HepG2 (cell line): ENCODE measurements at regions of chr19 and their contacts with region 1.

Region 1: GRCh38 chr19:8321060-8321985 is at the starts of genes NDUFA7 and RPS28:
- DNase-seq: peak; percentile 85
- ATAC-seq: peak; percentile 81
- H3K4me3 ChIP-seq: peak within 1 kb of the TSS; percentile 69 to 97 (median 82)
- H3K27ac ChIP-seq: peak within 1 kb of the TSS; percentile 88
- H3K4me1 ChIP-seq: peaks cover 36% of the 10 kb centered on the region
- H3K27me3 ChIP-seq: no peaks in the 10 kb centered on the region; a peak in 1 of 5 replicates
- CTCF ChIP-seq: peak; percentile 79
- EP300 ChIP-seq: no peak
- POLR2A ChIP-seq: peak; percentile 90 to 92
- RAD21 ChIP-seq: peak; percentile 58
- total RNA-seq, gene NDUFA7: 57.2 and 64.5 TPM in 2 replicates
- total RNA-seq, gene RPS28: 281 and 319 TPM in 2 replicates

Region 2: GRCh38 chr19:8204961-8205360 is 116.4 kb before region 1 on chr19:
- CTCF ChIA-PET with region 1: no interaction called
- POLR2A ChIA-PET with region 1: no interaction called
- in situ Hi-C with region 1: no loop called
- intact Hi-C with region 1: no loop called
- DNase-seq: no peak
- ATAC-seq: no peak
- H3K4me3 ChIP-seq: no peak overlapping the region
- H3K27ac ChIP-seq: no peak overlapping the region
- H3K4me1 ChIP-seq: peaks cover 50% of the 10 kb centered on the region
- H3K27me3 ChIP-seq: peaks cover 0 to 7% of the 10 kb centered on the region in 2 experiments; a peak in 1 of 5 replicates
- CTCF ChIP-seq: no peak
- EP300 ChIP-seq: no peak
- POLR2A ChIP-seq: no peak
- RAD21 ChIP-seq: no peak

Region 3: DNA sequence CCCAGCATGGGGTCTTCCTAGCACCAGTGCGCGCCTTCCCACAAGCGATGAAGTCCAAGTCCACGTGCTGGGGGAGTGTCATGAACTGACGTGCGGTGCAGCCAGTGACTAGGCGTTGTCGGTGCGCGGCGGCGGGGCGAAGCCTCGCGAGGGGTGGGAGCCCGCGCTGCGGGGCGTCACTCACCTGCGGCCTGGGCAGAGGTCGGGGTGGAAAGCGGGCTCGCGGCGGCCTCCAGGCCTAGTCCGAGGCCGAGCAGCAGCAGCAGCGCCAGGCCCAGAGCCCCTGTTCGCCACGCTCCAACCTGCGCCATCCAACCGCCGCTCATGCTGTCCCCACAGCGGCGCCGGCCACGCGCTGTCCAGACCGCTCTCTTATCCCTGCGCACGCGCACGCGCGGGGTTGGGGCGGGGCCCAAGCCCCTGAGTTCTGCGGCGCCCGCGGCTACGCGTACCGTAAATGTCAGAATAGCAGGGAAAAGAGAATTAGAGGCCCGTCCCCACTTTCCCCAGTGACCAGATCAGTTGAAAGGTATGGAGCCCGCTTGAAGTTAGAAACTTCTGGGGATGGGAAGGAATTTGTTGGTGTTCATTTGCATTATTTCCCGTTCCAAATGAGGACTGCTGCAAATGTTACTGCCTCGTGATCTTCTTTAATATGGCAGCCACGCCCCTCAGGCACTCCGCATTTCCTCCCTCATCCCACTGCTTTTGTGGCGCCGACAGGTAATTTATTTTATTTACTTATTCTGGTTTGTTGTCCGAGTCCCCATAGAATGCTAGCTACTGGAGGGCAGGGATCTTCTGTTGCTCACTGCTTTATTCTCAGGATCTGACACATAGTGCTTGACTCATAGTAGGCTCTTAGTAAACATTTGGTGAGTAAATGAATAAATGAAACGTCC is 13.1 kb before region 1 on chr19 and contains the start of gene CD320:
- CTCF ChIA-PET with region 1: no interaction called
- POLR2A ChIA-PET with region 1: interaction called, 39 read pairs
- in situ Hi-C with region 1: no loop called
- intact Hi-C with region 1: no loop called
- DNase-seq: peak; percentile 86
- ATAC-seq: peak; percentile 89
- H3K4me3 ChIP-seq: peak within 1 kb of the TSS; percentile 50 to 77 (median 66)
- H3K27ac ChIP-seq: peak within 1 kb of the TSS; percentile 85
- H3K4me1 ChIP-seq: peaks cover 39% of the 10 kb centered on the region
- H3K27me3 ChIP-seq: no peaks in the 10 kb centered on the region
- CTCF ChIP-seq: no peak; the same call in none of the 2 replicates
- EP300 ChIP-seq: no peak
- POLR2A ChIP-seq: peak; percentile 86 to 90
- RAD21 ChIP-seq: no peak; the same call in none of the 2 replicates
- total RNA-seq, gene CD320: 44.4 and 99.9 TPM in 2 replicates

Region 4: GRCh38 chr19:8334458-8335342 is 13.4 kb after region 1 on chr19:
- CTCF ChIA-PET with region 1: no interaction called
- POLR2A ChIA-PET with region 1: interaction called, 16 read pairs
- in situ Hi-C with region 1: no loop called
- intact Hi-C with region 1: no loop called
- DNase-seq: peak; percentile 27
- ATAC-seq: peak; percentile 56
- H3K4me3 ChIP-seq: peak overlapping the region; percentile 26 to 65 (median 43); a peak in 4 of 6 replicates
- H3K27ac ChIP-seq: no peak overlapping the region
- H3K4me1 ChIP-seq: peaks cover 47% of the 10 kb centered on the region
- H3K27me3 ChIP-seq: peaks cover 10 to 52% of the 10 kb centered on the region in 2 experiments
- CTCF ChIP-seq: no peak
- EP300 ChIP-seq: no peak
- POLR2A ChIP-seq: no peak
- RAD21 ChIP-seq: no peak

Region 5: DNA sequence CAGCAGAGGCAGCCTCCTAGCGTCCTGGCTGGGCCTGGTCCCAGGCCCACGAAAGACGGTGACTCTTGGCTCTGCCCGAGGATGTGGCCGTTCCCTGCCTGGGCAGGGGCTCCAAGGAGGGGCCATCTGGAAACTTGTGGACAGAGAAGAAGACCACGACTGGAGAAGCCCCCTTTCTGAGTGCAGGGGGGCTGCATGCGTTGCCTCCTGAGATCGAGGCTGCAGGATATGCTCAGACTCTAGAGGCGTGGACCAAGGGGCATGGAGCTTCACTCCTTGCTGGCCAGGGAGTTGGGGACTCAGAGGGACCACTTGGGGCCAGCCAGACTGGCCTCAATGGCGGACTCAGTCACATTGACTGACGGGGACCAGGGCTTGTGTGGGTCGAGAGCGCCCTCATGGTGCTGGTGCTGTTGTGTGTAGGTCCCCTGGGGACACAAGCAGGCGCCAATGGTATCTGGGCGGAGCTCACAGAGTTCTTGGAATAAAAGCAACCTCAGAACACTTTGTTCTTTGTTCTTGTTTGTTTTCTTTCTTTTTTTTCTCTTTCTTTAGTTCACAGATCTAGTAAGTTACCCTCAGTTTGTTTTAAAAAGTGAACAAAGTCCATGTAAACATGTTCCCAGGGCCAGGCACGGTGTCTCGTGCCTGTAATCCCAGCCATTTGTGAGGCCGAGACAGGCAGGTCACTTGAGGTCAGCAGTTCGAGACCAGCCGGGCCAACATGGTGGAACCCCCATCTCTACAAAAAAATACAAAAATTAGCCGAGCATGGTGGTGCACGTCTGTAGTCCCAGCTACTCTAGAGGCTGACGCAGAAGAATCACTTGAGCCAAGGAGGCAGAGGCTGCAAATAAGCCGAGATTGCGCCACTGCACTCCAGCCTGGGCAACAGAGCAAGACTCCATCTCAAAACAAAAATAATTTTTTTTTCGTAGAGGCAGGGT is 52.8 kb after region 1 on chr19:
- CTCF ChIA-PET with region 1: no interaction called
- POLR2A ChIA-PET with region 1: interaction called, 10 read pairs
- in situ Hi-C with region 1: no loop called
- intact Hi-C with region 1: no loop called
- DNase-seq: peak; percentile 98
- ATAC-seq: peak; percentile 91
- H3K4me3 ChIP-seq: no peak overlapping the region
- H3K27ac ChIP-seq: peak overlapping the region; percentile 84
- H3K4me1 ChIP-seq: peaks cover 70% of the 10 kb centered on the region
- H3K27me3 ChIP-seq: no peaks in the 10 kb centered on the region
- CTCF ChIP-seq: peak; percentile 91
- EP300 ChIP-seq: peak; percentile 96
- POLR2A ChIP-seq: peak in 1 of 2 experiments; percentile 23; a peak in 1 of 4 replicates
- RAD21 ChIP-seq: peak; percentile 94

Region 6: GRCh38 chr19:8473648-8474476 is 152.5 kb after region 1 on chr19:
- CTCF ChIA-PET with region 1: no interaction called
- POLR2A ChIA-PET with region 1: no interaction called
- in situ Hi-C with region 1: no loop called
- intact Hi-C with region 1: no loop called
- DNase-seq: no peak
- ATAC-seq: no peak
- H3K4me3 ChIP-seq: no peak overlapping the region
- H3K27ac ChIP-seq: no peak overlapping the region
- H3K4me1 ChIP-seq: no peaks in the 10 kb centered on the region
- H3K27me3 ChIP-seq: no peaks in the 10 kb centered on the region
- CTCF ChIP-seq: no peak
- EP300 ChIP-seq: no peak
- POLR2A ChIP-seq: no peak
- RAD21 ChIP-seq: no peak